Right lobe of liver (tissue), 6 donors: ENCODE measurements at regions of chr1 and their contacts with region 1.

Region 1: GRCh38 chr1:37449936-37450335 is 24.4 kb upstream of the ZC3H12A start:
- DNase-seq: no peak
- ATAC-seq: peak in 1 of 4 donors; percentile 32
- H3K4me3 ChIP-seq: no peak overlapping the region
- H3K27ac ChIP-seq: no peak overlapping the region
- H3K4me1 ChIP-seq: no peaks in the 10 kb centered on the region
- H3K27me3 ChIP-seq: no peaks in the 10 kb centered on the region
- CTCF ChIP-seq: no peak
- POLR2A ChIP-seq: no peak

Region 2: GRCh38 chr1:37486680-37487618 is 37.0 kb after region 1 on chr1:
- intact Hi-C with region 1: loop called in 1 of 2 experiments (anchors 5 kb)
- DNase-seq: peak; percentile 74 to 81 (median 77)
- ATAC-seq: peak; percentile 77 to 92 (median 88)
- H3K4me3 ChIP-seq: no peak overlapping the region
- H3K27ac ChIP-seq: peak overlapping the region in 2 of 3 donors; percentile 20 to 47
- H3K4me1 ChIP-seq: peaks cover 0 to 30% (median 0%) of the 10 kb centered on the region in 4 donors
- H3K27me3 ChIP-seq: no peaks in the 10 kb centered on the region
- CTCF ChIP-seq: peak; percentile 97 to 99 (median 99)
- POLR2A ChIP-seq: no peak

Region 3: GRCh38 chr1:37682334-37682987 is 232.5 kb after region 1 on chr1:
- intact Hi-C with region 1: loop called (anchors 10 kb)
- DNase-seq: peak in 2 of 3 donors; percentile 50 to 60
- ATAC-seq: peak; percentile 72 to 85 (median 77)
- H3K4me3 ChIP-seq: no peak overlapping the region
- H3K27ac ChIP-seq: no peak overlapping the region
- H3K4me1 ChIP-seq: no peaks in the 10 kb centered on the region
- H3K27me3 ChIP-seq: no peaks in the 10 kb centered on the region
- CTCF ChIP-seq: peak; percentile 83 to 88 (median 84)
- POLR2A ChIP-seq: no peak